Tibial artery (tissue), 4 donors: ENCODE measurements at regions of chr12 and their contacts with region 1.

Region 1: GRCh38 chr12:62581288-62582064 is 114.8 kb downstream of the MON2 start:
- DNase-seq: no peak
- H3K4me3 ChIP-seq: no peak overlapping the region
- H3K27ac ChIP-seq: no peak overlapping the region
- H3K4me1 ChIP-seq: no peaks in the 10 kb centered on the region
- H3K27me3 ChIP-seq: no peaks in the 10 kb centered on the region
- CTCF ChIP-seq: peak; percentile 65 to 77

Region 2: GRCh38 chr12:62522984-62523383 is 58.5 kb before region 1 on chr12:
- intact Hi-C with region 1: no loop called
- DNase-seq: no peak
- H3K4me3 ChIP-seq: no peak overlapping the region
- H3K27ac ChIP-seq: no peak overlapping the region
- H3K4me1 ChIP-seq: peaks cover 0 to 35% (median 3%) of the 10 kb centered on the region in 4 donors
- H3K27me3 ChIP-seq: no peaks in the 10 kb centered on the region
- CTCF ChIP-seq: no peak

Region 3: DNA sequence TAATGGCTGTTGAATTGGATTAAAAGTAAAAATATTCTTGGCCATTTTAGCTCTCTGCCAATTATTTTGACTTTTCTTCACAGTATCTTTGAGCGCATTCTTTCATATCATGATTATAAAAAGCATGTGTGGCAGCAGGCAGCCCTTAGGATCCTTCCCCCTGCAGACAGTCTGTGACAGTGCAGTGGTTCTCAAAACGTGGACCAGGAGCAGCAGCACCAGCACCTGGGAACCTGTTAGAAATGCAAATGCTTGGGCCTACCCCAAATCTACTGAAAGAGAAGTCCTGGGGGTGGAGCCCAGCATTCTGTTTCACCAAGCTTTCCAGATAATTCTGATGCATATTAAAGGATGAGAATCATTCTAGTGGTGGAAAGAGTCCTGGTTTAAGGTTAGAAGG is 40.7 kb after region 1 on chr12:
- intact Hi-C with region 1: loop called (anchors 2 kb)
- DNase-seq: no peak
- H3K4me3 ChIP-seq: no peak overlapping the region
- H3K27ac ChIP-seq: no peak overlapping the region
- H3K4me1 ChIP-seq: peaks cover 0 to 4% (median 0%) of the 10 kb centered on the region in 4 donors
- H3K27me3 ChIP-seq: no peaks in the 10 kb centered on the region
- CTCF ChIP-seq: no peak

Region 4: DNA sequence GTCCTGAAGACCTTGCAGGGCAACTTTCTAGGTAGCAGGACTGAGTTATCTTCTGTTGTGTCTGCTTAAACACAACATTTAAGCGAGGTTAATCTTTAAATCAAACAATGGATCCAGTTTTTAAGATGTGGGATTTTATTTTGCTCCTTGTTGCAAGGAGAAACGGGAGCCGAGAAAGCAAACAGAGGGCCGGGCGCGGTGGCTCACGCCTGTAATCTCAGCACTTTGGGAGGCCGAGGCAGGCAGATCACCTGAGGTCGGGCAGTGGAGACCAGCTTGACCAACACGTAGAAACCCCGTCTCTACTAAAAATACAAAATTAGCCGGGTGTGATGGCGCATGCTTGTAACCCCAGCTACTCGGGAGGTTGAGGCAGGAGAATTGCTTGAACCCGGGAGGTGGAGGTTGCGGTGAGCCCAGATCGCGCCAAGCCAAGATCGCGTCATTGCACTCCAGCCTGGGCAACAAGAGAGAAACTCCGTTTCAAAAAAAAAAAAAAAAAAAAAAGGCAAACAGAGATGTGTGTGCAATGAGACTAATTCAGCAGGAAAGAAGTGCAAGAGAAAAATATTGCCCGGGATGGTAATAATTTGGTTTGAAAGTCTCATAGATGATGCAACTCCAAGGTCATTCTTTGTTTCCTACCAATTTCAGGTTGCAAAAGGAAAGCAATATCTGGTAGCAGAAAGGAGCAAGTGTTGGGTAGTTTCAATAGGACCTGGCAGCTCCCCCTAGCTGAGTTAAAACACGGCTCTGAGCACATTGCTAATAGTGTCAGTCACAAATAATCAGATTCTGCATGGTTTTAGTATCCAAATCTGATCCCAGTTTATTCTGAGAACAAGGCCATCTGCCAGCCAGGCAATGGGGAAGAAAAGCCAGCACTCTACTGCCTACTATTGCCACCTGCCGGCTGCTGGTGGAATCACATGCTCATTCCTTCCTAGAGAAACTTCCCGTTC is 212.1 kb after region 1 on chr12:
- intact Hi-C with region 1: loop called (anchors 5 kb)
- DNase-seq: peak; percentile 91 to 92
- H3K4me3 ChIP-seq: no peak overlapping the region
- H3K27ac ChIP-seq: peak overlapping the region; percentile 40 to 52
- H3K4me1 ChIP-seq: peaks cover 0 to 21% (median 9%) of the 10 kb centered on the region in 4 donors
- H3K27me3 ChIP-seq: no peaks in the 10 kb centered on the region
- CTCF ChIP-seq: peak; percentile 94 to 95